ENCODE measurements at regions of chr6 and their contacts with region 1.

Region 1: GRCh38 chr6:70884074-70884983 is 72.5 kb downstream of the B3GAT2 start:
- DNase-seq: peak; percentile 9
- H3K4me3 ChIP-seq: no peak overlapping the region
- CTCF ChIP-seq: peak; percentile 89

Region 2: GRCh38 chr6:70706491-70707123 is 177.7 kb before region 1 on chr6:
- in situ Hi-C with region 1: loop called (anchors 5 kb)
- DNase-seq: peak; percentile 47
- H3K4me3 ChIP-seq: no peak overlapping the region
- CTCF ChIP-seq: no peak

Region 3: DNA sequence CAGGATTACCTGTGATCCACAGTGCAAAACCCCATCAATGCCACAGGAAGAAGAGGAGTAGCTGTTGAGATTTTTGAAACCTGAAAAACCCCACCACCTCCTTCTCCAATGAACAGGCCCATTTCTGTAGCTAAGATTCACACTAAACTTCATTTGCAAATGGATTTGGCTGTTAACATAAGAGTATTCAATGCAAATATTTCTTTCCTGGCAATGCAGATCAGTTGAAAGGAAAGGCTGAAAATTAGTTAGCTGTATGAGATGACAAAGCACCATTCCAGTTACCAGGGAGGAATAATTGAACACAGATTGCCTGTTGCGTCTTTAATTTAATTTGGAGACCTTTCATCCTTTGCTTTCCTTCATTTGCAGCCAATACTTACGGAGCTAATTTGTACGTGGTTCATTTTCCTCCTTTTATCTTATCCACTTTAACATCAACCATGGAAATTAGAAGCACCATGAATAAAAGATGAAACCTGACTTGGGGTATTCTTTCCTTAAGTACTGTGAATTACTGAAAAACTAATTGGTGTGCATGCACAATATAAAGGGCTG is 68.4 kb after region 1 on chr6:
- in situ Hi-C with region 1: no loop called
- DNase-seq: no peak
- H3K4me3 ChIP-seq: no peak overlapping the region
- CTCF ChIP-seq: no peak

Measured in astrocyte of the cerebellum (primary cell).